ENCODE measurements at regions of chr9 and their contacts with region 1.

Region 1: DNA sequence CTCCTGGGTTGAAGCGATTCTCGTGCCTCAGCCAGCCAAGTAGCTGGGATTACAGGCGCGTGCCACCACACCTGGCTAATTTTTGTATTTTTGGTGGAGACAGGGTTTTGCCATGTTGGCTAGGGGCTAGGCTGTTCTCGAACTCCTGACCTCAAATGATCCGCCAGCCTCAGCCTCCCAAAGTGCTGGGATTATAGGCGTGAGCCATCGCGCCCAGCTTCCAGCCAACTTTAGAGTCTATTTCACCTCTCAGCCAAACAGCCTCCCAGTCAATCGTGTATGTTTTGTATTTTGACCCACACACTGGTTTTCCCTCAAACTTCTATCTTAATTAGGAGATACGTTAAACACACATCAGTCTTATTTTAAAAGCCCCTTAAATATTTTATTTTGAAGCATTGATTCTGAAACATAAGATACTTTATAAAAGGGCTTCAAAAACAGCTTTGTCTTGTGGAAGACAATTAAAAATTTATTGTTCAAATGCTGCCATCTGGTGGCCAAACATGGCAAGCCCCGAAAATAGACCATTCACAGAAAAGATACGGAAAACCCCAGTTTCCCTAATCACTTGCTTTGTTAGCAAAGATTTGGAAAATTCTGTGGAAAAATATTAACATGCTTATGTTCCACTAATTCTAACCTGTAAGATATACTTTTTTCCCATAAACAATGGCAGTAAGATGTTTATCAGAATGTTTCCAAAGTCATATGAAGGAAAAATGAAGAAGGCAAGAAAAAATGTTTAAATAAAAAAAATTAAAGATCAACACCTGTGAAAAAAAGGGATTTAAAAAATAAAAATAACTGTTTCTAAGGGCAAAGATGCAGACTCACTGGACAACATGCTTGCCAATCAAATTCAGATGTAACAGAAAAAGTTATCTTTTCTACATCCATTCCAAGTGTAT is 33.1 kb downstream of the APTX start:
- DNase-seq: peak in 1 of 2 donors; percentile 72
- H3K4me3 ChIP-seq: no peak overlapping the region
- H3K27ac ChIP-seq: no peak overlapping the region
- H3K4me1 ChIP-seq: no peaks in the 10 kb centered on the region
- H3K27me3 ChIP-seq: no peaks in the 10 kb centered on the region
- CTCF ChIP-seq: peak in 2 of 3 experiments; percentile 58 to 75

Region 2: GRCh38 chr9:32378993-32379729 is 589.2 kb before region 1 on chr9:
- intact Hi-C with region 1: loop called (anchors 1 kb)
- DNase-seq: no peak
- H3K4me3 ChIP-seq: no peak overlapping the region
- H3K27ac ChIP-seq: no peak overlapping the region
- H3K4me1 ChIP-seq: no peaks in the 10 kb centered on the region
- H3K27me3 ChIP-seq: no peaks in the 10 kb centered on the region
- CTCF ChIP-seq: peak; percentile 74 to 84 (median 77)

Region 3: DNA sequence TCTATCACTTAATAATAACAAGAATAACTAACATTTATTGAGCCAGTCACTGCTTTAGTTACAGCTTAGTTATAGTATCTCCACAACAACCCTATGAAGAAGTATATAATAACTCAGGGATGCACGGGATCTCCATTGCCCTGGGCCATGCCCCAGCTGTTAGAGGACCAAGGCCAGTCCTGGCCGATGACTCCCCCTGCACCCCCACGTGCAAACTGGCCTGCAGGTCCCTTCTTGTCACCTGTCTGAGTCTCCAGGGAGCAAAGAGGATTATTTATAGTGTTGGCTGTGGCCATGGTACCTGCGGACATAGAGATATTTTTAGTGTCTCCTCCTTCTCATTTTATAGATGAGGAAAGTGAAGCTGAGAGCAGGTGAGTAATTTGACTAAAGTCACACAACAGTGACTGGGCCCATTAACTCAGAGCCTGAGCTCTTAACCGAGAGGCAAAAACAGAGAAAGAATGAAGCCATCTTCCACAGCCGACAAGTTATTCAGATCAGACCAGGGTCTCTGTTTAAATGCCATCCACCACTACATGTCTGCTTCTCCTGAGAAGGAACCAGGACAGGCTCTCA is 90.6 kb before region 1 on chr9:
- intact Hi-C with region 1: no loop called
- DNase-seq: no peak
- H3K4me3 ChIP-seq: no peak overlapping the region
- H3K27ac ChIP-seq: no peak overlapping the region
- H3K4me1 ChIP-seq: no peaks in the 10 kb centered on the region
- H3K27me3 ChIP-seq: no peaks in the 10 kb centered on the region
- CTCF ChIP-seq: no peak